Left ventricle myocardium inferior (tissue), 1 donor: ENCODE measurements at regions of chr7 and their contacts with region 1.

Region 1: DNA sequence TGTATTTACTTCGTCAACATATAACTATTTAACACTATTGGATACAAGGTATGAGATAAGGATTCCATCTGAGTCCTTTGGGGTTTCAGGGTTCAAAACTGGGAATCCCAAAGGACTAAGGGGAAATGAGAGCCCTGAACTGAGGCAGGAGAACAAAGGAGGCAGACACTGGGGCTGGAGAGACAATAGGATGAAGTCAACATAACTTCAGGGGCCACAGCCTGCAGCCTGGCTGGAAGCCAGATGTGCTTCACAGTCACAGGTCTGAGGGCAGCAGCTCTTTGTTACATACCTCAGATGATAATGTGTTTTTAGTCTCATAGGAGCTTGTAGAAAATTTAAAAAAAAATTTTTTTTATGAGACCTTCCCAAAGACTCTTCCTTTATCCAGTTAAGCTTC is 73.3 kb downstream of the NRF1 start:
- DNase-seq: no peak
- H3K4me3 ChIP-seq: no peak overlapping the region
- H3K27ac ChIP-seq: no peak overlapping the region
- H3K4me1 ChIP-seq: peaks cover 8% of the 10 kb centered on the region
- H3K27me3 ChIP-seq: no peaks in the 10 kb centered on the region
- CTCF ChIP-seq: no peak

Region 2: GRCh38 chr7:129816742-129817141 is 132.0 kb after region 1 on chr7:
- intact Hi-C with region 1: loop called (anchors 10 kb)
- DNase-seq: no peak
- H3K4me3 ChIP-seq: no peak overlapping the region
- H3K27ac ChIP-seq: no peak overlapping the region
- H3K4me1 ChIP-seq: no peaks in the 10 kb centered on the region
- H3K27me3 ChIP-seq: no peaks in the 10 kb centered on the region
- CTCF ChIP-seq: no peak